Caco-2 (cell line): ENCODE measurements at regions of chr16 and their contacts with region 1.

Region 1: GRCh38 chr16:87229230-87230192 is 87.7 kb downstream of the C16orf95 start:
- DNase-seq: no peak
- H3K4me3 ChIP-seq: no peak overlapping the region
- H3K4me3 Mint-ChIP-seq: no peak overlapping the region
- H3K27ac Mint-ChIP-seq: no peak overlapping the region
- H3K4me1 ChIP-seq: no peaks in the 10 kb centered on the region
- H3K4me1 Mint-ChIP-seq: no peaks in the 10 kb centered on the region
- H3K27me3 ChIP-seq: no peaks in the 10 kb centered on the region
- H3K27me3 Mint-ChIP-seq: peaks cover 10% of the 10 kb centered on the region
- CTCF ChIP-seq: no peak

Region 2: GRCh38 chr16:87145181-87146176 is 84.0 kb before region 1 on chr16:
- CTCF ChIA-PET with region 1: no interaction called
- POLR2A ChIA-PET with region 1: no interaction called
- intact Hi-C with region 1: no loop called
- DNase-seq: no peak
- H3K4me3 ChIP-seq: no peak overlapping the region
- H3K4me3 Mint-ChIP-seq: no peak overlapping the region
- H3K27ac Mint-ChIP-seq: no peak overlapping the region
- H3K4me1 ChIP-seq: no peaks in the 10 kb centered on the region
- H3K4me1 Mint-ChIP-seq: no peaks in the 10 kb centered on the region
- H3K27me3 ChIP-seq: no peaks in the 10 kb centered on the region
- H3K27me3 Mint-ChIP-seq: no peaks in the 10 kb centered on the region
- CTCF ChIP-seq: no peak

Region 3: DNA sequence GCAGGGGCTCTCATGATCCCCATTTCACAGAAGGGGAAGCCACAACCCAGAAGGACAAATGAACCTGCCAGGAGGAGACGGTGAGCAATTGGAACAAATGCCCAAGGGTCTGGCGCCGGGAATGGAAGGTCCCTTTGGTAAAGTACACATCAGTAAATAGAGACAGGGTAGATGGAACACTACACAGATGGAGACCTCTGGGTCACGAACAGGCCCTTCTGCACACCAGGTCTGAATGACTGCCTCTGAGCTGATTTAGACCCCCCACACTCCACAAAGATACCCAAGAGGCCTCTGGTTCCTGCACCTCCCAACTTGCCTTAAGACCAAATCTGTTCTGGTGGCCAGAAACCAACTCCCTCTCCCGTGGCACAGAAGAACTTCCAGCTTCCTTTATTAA is 12.5 kb after region 1 on chr16:
- CTCF ChIA-PET with region 1: no interaction called
- POLR2A ChIA-PET with region 1: interaction called, 14 read pairs
- intact Hi-C with region 1: no loop called
- DNase-seq: no peak
- H3K4me3 ChIP-seq: no peak overlapping the region
- H3K4me3 Mint-ChIP-seq: no peak overlapping the region
- H3K27ac Mint-ChIP-seq: no peak overlapping the region
- H3K4me1 ChIP-seq: peaks cover 13% of the 10 kb centered on the region; the same call in 1 of the 2 replicates
- H3K4me1 Mint-ChIP-seq: peaks cover 10% of the 10 kb centered on the region
- H3K27me3 ChIP-seq: no peaks in the 10 kb centered on the region
- H3K27me3 Mint-ChIP-seq: peaks cover 13% of the 10 kb centered on the region
- CTCF ChIP-seq: no peak